CD8-positive, alpha-beta T cell (primary cell): ENCODE measurements at regions of chr5 and their contacts with region 1.

Region 1: GRCh38 chr5:176415952-176416924 is at the start of gene CLTB:
- DNase-seq: peak; percentile 83 to 97 (median 91)
- ATAC-seq: peak; percentile 91
- H3K4me3 ChIP-seq: peak within 1 kb of the TSS; percentile 68 to 89
- H3K4me3 Mint-ChIP-seq: peak within 1 kb of the TSS; percentile 83
- H3K27ac ChIP-seq: peak within 1 kb of the TSS; percentile 69 to 78
- H3K27ac Mint-ChIP-seq: peak within 1 kb of the TSS; percentile 87
- H3K4me1 ChIP-seq: peaks cover 25% of the 10 kb centered on the region
- H3K4me1 Mint-ChIP-seq: peaks cover 42% of the 10 kb centered on the region
- H3K27me3 ChIP-seq: no peaks in the 10 kb centered on the region
- H3K27me3 Mint-ChIP-seq: no peaks in the 10 kb centered on the region
- CTCF ChIP-seq: peak; percentile 82
- total RNA-seq, gene CLTB: 84.3 to 86.6 TPM

Region 2: DNA sequence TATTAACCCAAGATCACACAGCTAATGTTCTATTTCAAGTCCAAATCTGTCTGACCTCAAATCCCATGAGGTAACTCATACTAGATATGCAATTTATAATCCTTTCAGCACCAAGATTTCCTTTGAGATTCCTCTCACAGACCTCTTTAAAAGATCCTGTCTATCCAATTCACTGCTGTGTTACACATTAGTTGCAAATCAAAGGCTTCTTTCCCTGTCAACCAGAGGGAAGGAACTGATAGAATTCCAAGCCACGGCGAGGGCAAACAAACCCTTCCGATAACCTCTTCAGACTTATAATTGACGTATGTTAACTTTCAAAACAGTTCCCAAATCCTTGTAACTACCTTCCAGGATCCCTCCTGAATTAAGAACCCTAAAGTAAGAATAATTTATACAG is 1141.1 kb before region 1 on chr5:
- CTCF ChIA-PET with region 1: no interaction called
- POLR2A ChIA-PET with region 1: no interaction called
- intact Hi-C with region 1: no loop called
- DNase-seq: no peak
- ATAC-seq: no peak
- H3K4me3 ChIP-seq: no peak overlapping the region
- H3K4me3 Mint-ChIP-seq: no peak overlapping the region
- H3K27ac ChIP-seq: no peak overlapping the region
- H3K27ac Mint-ChIP-seq: no peak overlapping the region
- H3K4me1 ChIP-seq: no peaks in the 10 kb centered on the region
- H3K4me1 Mint-ChIP-seq: no peaks in the 10 kb centered on the region
- H3K27me3 ChIP-seq: no peaks in the 10 kb centered on the region
- H3K27me3 Mint-ChIP-seq: peaks cover 17% of the 10 kb centered on the region
- CTCF ChIP-seq: no peak

Region 3: DNA sequence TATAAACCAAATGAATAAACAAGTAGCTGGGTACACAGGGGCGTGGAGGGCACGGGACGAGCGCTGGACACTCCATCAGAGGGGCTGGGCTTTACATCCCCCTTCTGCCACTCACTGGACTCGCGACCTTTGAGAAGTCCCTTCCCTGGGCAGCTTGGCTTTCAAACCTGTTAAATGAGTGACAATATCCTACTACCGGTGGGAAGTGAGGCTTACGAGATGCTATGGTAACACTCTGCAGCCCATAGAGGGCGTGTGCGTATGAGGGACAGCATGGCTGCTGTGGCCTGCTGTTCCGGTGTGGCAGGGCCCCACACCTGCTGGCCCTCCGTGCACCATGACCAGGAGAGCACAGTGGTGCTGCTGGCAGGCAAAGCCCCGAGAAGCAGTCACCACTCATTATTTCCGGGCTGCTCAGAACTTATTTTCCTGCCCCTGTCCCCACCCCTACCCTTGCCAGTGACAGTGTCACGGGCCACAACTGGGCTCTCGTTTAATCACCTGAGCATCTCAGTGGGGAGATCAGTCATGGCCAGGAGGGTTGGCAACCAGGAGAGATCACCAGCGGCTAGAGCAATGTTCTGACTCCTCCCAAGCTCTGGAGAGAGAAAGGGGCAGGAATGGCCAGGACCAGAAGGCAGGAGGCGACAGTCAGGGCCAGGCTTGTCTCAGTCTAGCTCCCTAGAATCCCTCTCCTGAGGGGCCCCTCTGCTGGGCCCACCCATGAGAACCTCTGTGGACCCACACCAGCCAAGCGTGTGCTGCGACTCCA is 10.4 kb before region 1 on chr5:
- CTCF ChIA-PET with region 1: interaction called, 19 read pairs
- POLR2A ChIA-PET with region 1: interaction called, 4 read pairs
- intact Hi-C with region 1: no loop called
- DNase-seq: no peak
- ATAC-seq: no peak
- H3K4me3 ChIP-seq: no peak overlapping the region
- H3K4me3 Mint-ChIP-seq: no peak overlapping the region
- H3K27ac ChIP-seq: no peak overlapping the region
- H3K27ac Mint-ChIP-seq: no peak overlapping the region
- H3K4me1 ChIP-seq: no peaks in the 10 kb centered on the region
- H3K4me1 Mint-ChIP-seq: peaks cover 2% of the 10 kb centered on the region
- H3K27me3 ChIP-seq: no peaks in the 10 kb centered on the region
- H3K27me3 Mint-ChIP-seq: no peaks in the 10 kb centered on the region
- CTCF ChIP-seq: no peak

Region 4: DNA sequence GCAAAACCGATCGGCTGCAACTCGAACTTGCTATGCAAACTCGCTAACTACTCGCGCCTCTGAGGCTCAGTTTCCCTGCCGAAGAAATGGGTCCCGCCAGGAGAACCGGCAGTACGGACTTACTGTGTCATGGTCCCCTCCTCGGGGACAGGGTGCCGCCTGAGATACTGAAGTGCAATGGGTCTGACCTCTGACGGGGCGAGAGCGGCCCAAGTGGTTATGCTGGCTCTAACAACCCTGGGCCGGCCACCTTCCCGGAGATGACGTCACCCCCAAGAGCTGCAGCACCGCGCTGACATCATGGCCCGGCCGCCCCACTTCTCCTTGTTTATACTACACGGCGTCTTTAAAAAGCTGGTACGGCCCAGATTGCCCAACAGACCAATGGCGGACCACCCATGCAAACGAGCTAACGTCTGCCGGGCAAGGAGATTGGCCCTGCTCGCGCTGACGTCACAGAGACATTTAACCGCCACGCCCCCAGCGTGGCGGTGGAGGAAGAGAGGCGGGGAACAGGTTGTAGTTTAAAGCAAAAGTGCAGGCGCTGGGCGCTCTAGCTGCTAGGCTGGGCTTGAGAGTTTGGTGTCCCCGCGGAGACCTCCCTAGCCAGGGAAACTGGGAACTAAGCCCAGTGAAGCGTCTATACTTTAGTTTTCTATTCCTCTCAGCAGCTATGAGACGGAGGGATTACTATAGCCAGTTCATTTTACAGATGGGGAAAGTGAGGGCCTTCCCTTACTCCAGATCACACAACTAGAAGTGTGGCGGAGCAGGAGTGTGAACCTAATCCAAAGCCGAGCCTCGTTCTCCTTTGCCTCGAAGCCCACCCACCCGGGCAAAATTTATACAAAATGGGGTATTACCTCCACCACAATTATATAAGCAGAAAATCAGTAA is 121.6 kb after region 1 on chr5:
- CTCF ChIA-PET with region 1: interaction called, 26 read pairs
- POLR2A ChIA-PET with region 1: interaction called, 14 read pairs
- intact Hi-C with region 1: loop called (anchors 1 to 2 kb)
- DNase-seq: peak; percentile 94 to 100 (median 96)
- ATAC-seq: peak; percentile 70
- H3K4me3 ChIP-seq: peak overlapping the region; percentile 84 to 97
- H3K4me3 Mint-ChIP-seq: peak overlapping the region; percentile 98
- H3K27ac ChIP-seq: peak overlapping the region; percentile 95 to 99
- H3K27ac Mint-ChIP-seq: peak overlapping the region; percentile 100
- H3K4me1 ChIP-seq: peaks cover 70% of the 10 kb centered on the region
- H3K4me1 Mint-ChIP-seq: peaks cover 70% of the 10 kb centered on the region
- H3K27me3 ChIP-seq: no peaks in the 10 kb centered on the region
- H3K27me3 Mint-ChIP-seq: no peaks in the 10 kb centered on the region
- CTCF ChIP-seq: no peak

Region 5: GRCh38 chr5:176573564-176574296 is 157.5 kb after region 1 on chr5:
- CTCF ChIA-PET with region 1: interaction called, 34 read pairs
- POLR2A ChIA-PET with region 1: no interaction called
- intact Hi-C with region 1: loop called (anchors 1 kb)
- DNase-seq: peak; percentile 53 to 91 (median 77)
- ATAC-seq: peak; percentile 86
- H3K4me3 ChIP-seq: no peak overlapping the region
- H3K4me3 Mint-ChIP-seq: no peak overlapping the region
- H3K27ac ChIP-seq: no peak overlapping the region
- H3K27ac Mint-ChIP-seq: no peak overlapping the region
- H3K4me1 ChIP-seq: peaks cover 4% of the 10 kb centered on the region
- H3K4me1 Mint-ChIP-seq: peaks cover 4% of the 10 kb centered on the region
- H3K27me3 ChIP-seq: peaks cover 0 to 4% of the 10 kb centered on the region in 2 experiments
- H3K27me3 Mint-ChIP-seq: peaks cover 4% of the 10 kb centered on the region
- CTCF ChIP-seq: peak; percentile 72

Region 6: GRCh38 chr5:176647030-176647866 is 231.0 kb after region 1 on chr5 and contains the start of gene TSPAN17:
- CTCF ChIA-PET with region 1: no interaction called
- POLR2A ChIA-PET with region 1: interaction called, 3 read pairs
- intact Hi-C with region 1: loop called in 1 of 2 experiments (anchors 1 kb)
- DNase-seq: peak; percentile 93 to 99 (median 99)
- ATAC-seq: peak; percentile 89
- H3K4me3 ChIP-seq: peak within 1 kb of the TSS; percentile 66 to 67
- H3K4me3 Mint-ChIP-seq: peak within 1 kb of the TSS; percentile 89
- H3K27ac ChIP-seq: peak within 1 kb of the TSS; percentile 45 to 72
- H3K27ac Mint-ChIP-seq: peak within 1 kb of the TSS; percentile 90
- H3K4me1 ChIP-seq: peaks cover 50% of the 10 kb centered on the region
- H3K4me1 Mint-ChIP-seq: peaks cover 53% of the 10 kb centered on the region
- H3K27me3 ChIP-seq: no peaks in the 10 kb centered on the region
- H3K27me3 Mint-ChIP-seq: no peaks in the 10 kb centered on the region
- CTCF ChIP-seq: no peak
- total RNA-seq, gene TSPAN17: 9.5 to 9.8 TPM

Region 7: GRCh38 chr5:176702671-176703641 is 286.7 kb after region 1 on chr5:
- CTCF ChIA-PET with region 1: no interaction called
- POLR2A ChIA-PET with region 1: no interaction called
- intact Hi-C with region 1: no loop called
- DNase-seq: no peak
- ATAC-seq: no peak
- H3K4me3 ChIP-seq: no peak overlapping the region
- H3K4me3 Mint-ChIP-seq: no peak overlapping the region
- H3K27ac ChIP-seq: no peak overlapping the region
- H3K27ac Mint-ChIP-seq: no peak overlapping the region
- H3K4me1 ChIP-seq: no peaks in the 10 kb centered on the region
- H3K4me1 Mint-ChIP-seq: no peaks in the 10 kb centered on the region
- H3K27me3 ChIP-seq: peaks cover 0 to 3% of the 10 kb centered on the region in 2 experiments
- H3K27me3 Mint-ChIP-seq: peaks cover 35% of the 10 kb centered on the region
- CTCF ChIP-seq: no peak